Right ventricle myocardium superior (tissue), 1 donor: ENCODE measurements at regions of chr14 and their contacts with region 1.

Region 1: DNA sequence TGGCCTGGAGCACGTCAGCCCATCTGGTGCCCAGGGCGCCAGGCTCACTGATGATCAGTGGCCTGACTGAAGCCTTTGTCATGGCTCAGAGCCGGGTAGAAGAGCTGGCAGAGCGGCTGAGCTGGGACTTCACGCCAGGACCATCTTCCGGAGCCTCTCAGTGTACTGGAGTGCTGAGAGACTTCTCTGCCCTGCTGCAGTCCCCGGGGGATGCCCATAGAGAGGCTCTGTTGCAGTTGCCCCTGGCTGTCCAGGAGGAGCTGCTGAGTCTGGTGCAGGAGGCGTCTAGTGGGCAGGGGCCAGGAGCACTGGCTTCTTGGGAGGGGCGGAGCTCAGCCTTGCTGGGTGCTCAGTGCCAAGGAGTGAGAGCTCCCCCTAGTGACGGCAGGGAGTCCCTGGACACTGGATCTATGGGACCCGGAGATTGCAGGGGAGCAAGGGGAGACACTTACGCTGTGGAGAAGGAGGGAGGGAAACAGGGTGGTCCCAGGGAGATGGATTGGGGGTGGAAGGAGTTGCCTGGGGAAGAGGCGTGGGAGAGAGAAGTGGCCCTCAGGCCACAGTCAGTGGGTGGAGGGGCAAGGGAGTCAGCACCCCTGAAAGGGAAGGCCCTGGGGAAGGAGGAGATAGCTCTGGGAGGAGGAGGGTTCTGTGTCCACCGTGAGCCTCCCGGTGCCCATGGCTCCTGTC is 2.0 kb downstream of the KHNYN start:
- DNase-seq: peak; percentile 92
- ATAC-seq: peak; percentile 67

Region 2: DNA sequence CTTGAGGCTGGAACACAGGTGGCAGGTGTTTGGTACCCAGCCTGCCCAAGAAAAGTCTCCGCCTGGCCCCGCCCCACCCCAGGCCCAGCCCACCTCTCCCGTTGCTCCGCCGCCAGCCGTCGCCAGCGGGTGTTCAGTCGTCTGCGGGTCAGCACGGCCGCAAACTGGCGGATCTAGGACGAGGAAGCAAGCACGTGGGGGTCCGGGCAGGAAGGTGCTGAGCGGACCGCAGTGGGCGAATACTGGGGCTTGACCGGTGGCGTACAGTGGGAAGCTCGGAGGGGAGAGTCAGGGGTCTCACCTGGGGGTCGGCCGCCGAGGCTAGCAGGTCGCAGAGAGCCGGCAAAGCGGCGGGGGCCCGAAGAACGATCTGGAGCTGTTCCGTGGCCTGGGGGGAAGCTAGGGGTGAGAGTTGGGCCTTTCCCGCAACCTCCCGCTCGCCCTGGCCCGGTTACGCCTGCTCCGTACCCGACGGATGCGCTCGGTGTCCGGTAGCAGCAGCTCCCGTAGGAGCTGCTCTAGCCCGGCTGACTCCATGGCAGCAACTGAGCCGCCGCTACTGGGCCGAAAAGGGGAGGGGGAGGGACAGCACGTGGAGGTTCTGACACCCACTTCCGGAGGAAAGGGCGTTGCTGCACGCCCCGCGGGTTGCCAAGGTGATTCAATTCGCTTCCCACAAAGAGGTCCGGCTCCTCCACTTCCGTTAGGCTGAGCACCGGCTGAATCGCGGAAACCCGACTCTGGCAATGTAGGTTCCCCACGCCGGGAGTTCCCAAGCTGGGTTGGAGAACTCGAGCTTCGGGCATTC is 243.3 kb before region 1 on chr14 and contains the start of gene IPO4:
- intact Hi-C with region 1: no loop called
- DNase-seq: peak; percentile 95
- ATAC-seq: peak; percentile 97
- total RNA-seq, gene IPO4: 10.5 TPM

Region 3: DNA sequence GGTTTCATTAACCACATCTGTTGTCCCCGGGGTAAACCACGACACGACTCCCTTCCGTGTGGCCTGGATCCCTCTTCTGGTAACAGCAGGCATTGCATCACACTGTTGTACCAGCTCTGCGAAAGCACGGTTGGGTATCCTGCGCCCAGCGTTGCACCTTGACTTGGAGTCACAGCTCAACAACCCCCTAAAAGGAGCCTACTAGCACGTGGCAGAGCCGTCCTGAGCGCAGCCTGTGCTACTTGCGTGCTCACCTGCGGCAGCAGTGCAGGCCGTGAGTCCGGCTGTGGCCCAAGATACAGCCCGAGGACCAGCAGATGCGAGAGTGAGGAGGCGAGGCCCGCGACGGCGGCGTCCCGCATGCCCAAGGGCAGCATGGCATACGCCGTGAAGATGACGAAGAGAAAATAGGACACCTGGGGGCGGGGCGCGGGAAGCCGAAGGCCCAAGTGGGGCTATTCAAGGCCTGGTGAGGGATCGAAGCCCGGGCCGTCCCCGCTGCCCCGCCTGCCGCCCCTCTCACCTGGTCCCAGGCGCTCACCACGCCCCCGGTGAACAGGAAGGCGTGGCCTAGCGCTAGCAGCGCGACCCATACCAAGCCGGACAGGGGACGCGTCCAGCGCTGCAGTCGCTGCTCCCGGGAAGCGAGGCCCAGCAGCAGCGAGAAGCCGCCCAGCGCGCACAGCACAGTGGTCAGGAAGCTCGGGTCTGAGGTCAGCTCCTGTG is 99.3 kb before region 1 on chr14:
- intact Hi-C with region 1: loop called (anchors 2 kb)
- DNase-seq: peak; percentile 72
- ATAC-seq: peak; percentile 75

Region 4: DNA sequence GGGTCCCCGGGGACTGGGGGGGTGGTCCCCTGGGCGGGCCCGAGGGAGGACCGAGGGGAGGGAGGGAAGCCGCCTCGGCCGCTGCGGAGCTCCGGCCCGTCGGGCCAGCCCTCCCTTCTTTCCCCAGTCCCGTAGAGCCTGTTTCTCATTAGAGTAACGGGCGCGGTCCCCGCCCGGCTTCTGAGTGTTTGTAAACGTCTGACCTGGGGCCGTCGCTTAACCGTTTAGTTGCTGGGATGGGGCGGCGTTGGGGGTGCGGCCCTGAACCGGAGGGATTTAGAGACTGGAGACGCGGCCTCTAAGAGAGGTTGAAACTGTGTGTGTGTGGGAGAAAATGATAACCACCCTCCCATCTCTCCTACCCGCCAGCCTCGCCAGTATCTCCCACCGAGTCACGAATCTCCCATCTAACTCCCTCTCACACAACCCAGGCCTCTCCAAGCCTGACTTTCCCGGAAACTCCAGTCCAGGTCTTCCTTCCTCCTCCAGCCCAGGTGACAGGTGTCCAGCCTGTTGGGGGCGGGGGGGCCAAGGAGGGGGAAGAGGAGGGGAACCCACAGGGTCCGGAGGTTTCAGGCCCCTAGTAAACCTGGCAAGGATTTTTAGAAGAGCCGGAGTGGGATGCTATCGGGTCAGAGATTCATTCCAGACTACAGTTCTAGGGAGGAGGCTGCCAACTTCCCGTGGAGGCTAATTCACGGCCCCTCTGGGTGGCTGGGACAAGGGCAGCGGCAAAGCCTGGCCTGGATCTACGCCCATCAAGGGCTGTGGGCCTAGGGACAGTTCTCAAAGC is 64.8 kb before region 1 on chr14:
- intact Hi-C with region 1: loop called (anchors 5 kb)
- DNase-seq: peak; percentile 91
- ATAC-seq: peak; percentile 85